CD8-positive, alpha-beta T cell (primary cell): ENCODE measurements at regions of chr7 and their contacts with region 1.

Region 1: GRCh38 chr7:123712619-123713018 is 36.2 kb downstream of the WASL start:
- DNase-seq: no peak
- ATAC-seq: no peak
- H3K4me3 ChIP-seq: no peak overlapping the region
- H3K4me3 Mint-ChIP-seq: no peak overlapping the region
- H3K27ac ChIP-seq: no peak overlapping the region
- H3K27ac Mint-ChIP-seq: no peak overlapping the region
- H3K4me1 ChIP-seq: peaks cover 14% of the 10 kb centered on the region
- H3K4me1 Mint-ChIP-seq: peaks cover 67% of the 10 kb centered on the region
- H3K27me3 ChIP-seq: no peaks in the 10 kb centered on the region
- H3K27me3 Mint-ChIP-seq: no peaks in the 10 kb centered on the region
- CTCF ChIP-seq: no peak

Region 2: DNA sequence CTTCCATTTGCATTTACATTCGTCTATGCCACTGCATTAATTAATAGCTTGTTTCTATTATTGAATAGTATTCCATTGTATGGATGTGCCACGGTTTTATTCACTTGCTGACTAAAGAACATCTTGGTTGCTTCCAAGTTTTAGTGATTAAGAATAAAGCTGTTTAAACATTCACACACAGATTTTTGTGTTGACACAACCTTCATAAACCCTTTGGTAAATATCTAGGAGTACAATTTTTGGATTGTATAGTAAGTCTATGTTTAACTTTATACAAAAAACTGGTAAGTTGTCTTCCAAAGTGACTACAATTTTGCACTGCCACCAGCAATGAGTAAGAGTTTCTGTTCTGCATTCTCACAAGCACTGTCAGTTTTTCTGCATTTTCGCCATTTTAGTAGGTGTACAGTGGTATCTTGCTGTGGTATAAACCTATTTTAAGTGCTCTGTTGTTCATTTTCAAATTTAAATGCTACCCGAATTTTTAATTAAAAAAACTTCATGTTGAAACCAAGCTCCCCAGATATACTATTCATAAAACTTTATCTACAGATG is 1135.1 kb before region 1 on chr7:
- CTCF ChIA-PET with region 1: no interaction called
- POLR2A ChIA-PET with region 1: no interaction called
- intact Hi-C with region 1: no loop called
- DNase-seq: no peak
- ATAC-seq: no peak
- H3K4me3 ChIP-seq: no peak overlapping the region
- H3K4me3 Mint-ChIP-seq: no peak overlapping the region
- H3K27ac ChIP-seq: no peak overlapping the region
- H3K27ac Mint-ChIP-seq: no peak overlapping the region
- H3K4me1 ChIP-seq: no peaks in the 10 kb centered on the region
- H3K4me1 Mint-ChIP-seq: no peaks in the 10 kb centered on the region
- H3K27me3 ChIP-seq: no peaks in the 10 kb centered on the region
- H3K27me3 Mint-ChIP-seq: no peaks in the 10 kb centered on the region
- CTCF ChIP-seq: no peak

Region 3: GRCh38 chr7:123455965-123456470 is 256.6 kb before region 1 on chr7:
- CTCF ChIA-PET with region 1: no interaction called
- POLR2A ChIA-PET with region 1: no interaction called
- intact Hi-C with region 1: no loop called
- DNase-seq: no peak
- ATAC-seq: no peak
- H3K4me3 ChIP-seq: no peak overlapping the region
- H3K4me3 Mint-ChIP-seq: no peak overlapping the region
- H3K27ac ChIP-seq: no peak overlapping the region
- H3K27ac Mint-ChIP-seq: no peak overlapping the region
- H3K4me1 ChIP-seq: no peaks in the 10 kb centered on the region
- H3K4me1 Mint-ChIP-seq: no peaks in the 10 kb centered on the region
- H3K27me3 ChIP-seq: no peaks in the 10 kb centered on the region
- H3K27me3 Mint-ChIP-seq: peaks cover 4% of the 10 kb centered on the region
- CTCF ChIP-seq: no peak

Region 4: GRCh38 chr7:123562121-123562520 is 150.5 kb before region 1 on chr7:
- CTCF ChIA-PET with region 1: no interaction called
- POLR2A ChIA-PET with region 1: no interaction called
- intact Hi-C with region 1: no loop called
- DNase-seq: no peak
- ATAC-seq: no peak
- H3K4me3 ChIP-seq: no peak overlapping the region
- H3K4me3 Mint-ChIP-seq: no peak overlapping the region
- H3K27ac ChIP-seq: no peak overlapping the region
- H3K27ac Mint-ChIP-seq: no peak overlapping the region
- H3K4me1 ChIP-seq: peaks cover 6% of the 10 kb centered on the region
- H3K4me1 Mint-ChIP-seq: no peaks in the 10 kb centered on the region
- H3K27me3 ChIP-seq: no peaks in the 10 kb centered on the region
- H3K27me3 Mint-ChIP-seq: peaks cover 2% of the 10 kb centered on the region
- CTCF ChIP-seq: no peak

Region 5: DNA sequence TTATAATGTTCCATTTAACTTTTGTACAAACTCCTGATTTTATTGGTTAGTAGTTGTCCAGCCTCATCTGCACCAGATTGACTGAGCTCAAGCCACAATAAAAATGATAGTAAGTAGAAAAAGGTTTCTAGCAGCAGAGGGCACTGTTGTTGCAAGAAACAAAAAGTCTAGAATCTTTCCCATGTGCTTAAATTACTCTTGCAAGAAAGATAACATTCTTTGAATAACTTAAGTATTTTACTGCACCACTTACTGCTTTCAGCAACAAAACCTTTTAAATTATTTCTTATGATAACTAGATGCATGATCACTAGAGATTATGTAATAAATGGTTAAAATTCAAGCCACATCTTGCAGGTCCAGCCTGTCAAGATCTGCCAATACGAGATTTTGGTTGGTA is 29.9 kb before region 1 on chr7:
- CTCF ChIA-PET with region 1: no interaction called
- POLR2A ChIA-PET with region 1: no interaction called
- intact Hi-C with region 1: no loop called
- DNase-seq: peak in 3 of 9 experiments; percentile 7 to 60 (median 53)
- ATAC-seq: no peak
- H3K4me3 ChIP-seq: no peak overlapping the region
- H3K4me3 Mint-ChIP-seq: no peak overlapping the region
- H3K27ac ChIP-seq: no peak overlapping the region
- H3K27ac Mint-ChIP-seq: no peak overlapping the region
- H3K4me1 ChIP-seq: no peaks in the 10 kb centered on the region
- H3K4me1 Mint-ChIP-seq: no peaks in the 10 kb centered on the region
- H3K27me3 ChIP-seq: no peaks in the 10 kb centered on the region
- H3K27me3 Mint-ChIP-seq: no peaks in the 10 kb centered on the region
- CTCF ChIP-seq: peak; percentile 69

Region 6: GRCh38 chr7:123734498-123734897 is 21.9 kb after region 1 on chr7:
- CTCF ChIA-PET with region 1: no interaction called
- POLR2A ChIA-PET with region 1: interaction called, 5 read pairs
- intact Hi-C with region 1: loop called in 1 of 2 experiments (anchors 2 kb)
- DNase-seq: no peak
- ATAC-seq: no peak
- H3K4me3 ChIP-seq: no peak overlapping the region
- H3K4me3 Mint-ChIP-seq: no peak overlapping the region
- H3K27ac ChIP-seq: no peak overlapping the region
- H3K27ac Mint-ChIP-seq: no peak overlapping the region
- H3K4me1 ChIP-seq: peaks cover 6% of the 10 kb centered on the region
- H3K4me1 Mint-ChIP-seq: peaks cover 51% of the 10 kb centered on the region
- H3K27me3 ChIP-seq: no peaks in the 10 kb centered on the region
- H3K27me3 Mint-ChIP-seq: no peaks in the 10 kb centered on the region
- CTCF ChIP-seq: no peak